ENCODE measurements at regions of chr4 and their contacts with region 1.

Region 1: DNA sequence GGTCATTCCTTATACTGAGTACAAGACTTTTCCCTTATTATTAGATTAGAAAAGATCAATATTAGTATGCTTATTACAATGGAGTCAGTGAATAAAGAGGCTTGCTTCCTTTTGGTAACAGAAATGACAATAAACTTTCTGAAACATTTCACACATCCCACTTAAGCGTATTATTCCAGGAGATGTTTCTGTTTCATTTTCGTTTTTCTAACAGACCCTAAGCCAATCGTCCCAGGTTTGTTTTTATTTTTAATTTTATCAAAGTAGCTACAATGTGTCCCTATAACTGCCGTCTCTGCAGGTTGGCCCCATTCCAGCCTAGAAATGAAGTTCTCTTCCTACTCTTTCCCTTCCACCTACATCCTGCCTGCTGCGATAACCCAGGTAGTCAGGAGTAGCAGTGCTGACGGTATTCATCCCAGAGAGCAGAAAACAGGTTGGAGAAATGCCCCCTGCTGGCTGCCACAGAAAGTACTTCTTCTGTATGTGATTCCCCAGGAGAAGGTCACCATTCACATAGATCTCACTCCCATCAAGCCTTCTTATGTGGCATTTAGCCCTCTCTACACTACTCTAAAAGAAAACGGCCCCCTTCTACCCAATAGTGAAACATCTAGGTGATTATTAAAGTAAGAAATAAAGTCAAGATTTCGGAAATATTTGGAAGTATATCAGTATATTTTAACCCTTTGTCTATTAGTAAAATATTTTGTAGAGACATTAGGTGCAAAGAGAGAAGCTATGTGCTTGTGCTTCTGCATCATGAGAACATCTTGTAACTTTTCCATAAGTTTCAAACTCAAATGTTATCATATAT is 40.4 kb downstream of the ENPEP start:
- DNase-seq: peak; percentile 64 to 72
- H3K4me3 ChIP-seq: peak overlapping the region; percentile 53; the same call in 1 of the 2 replicates
- H3K27ac ChIP-seq: no peak overlapping the region
- H3K4me1 ChIP-seq: no peaks in the 10 kb centered on the region
- H3K27me3 ChIP-seq: no peaks in the 10 kb centered on the region
- CTCF ChIP-seq: peak; percentile 78

Region 2: GRCh38 chr4:110344162-110344561 is 172.2 kb before region 1 on chr4:
- CTCF ChIA-PET with region 1: interaction called, 5 read pairs
- POLR2A ChIA-PET with region 1: no interaction called
- intact Hi-C with region 1: loop called (anchors 2 kb)
- DNase-seq: no peak
- H3K4me3 ChIP-seq: no peak overlapping the region
- H3K27ac ChIP-seq: no peak overlapping the region
- H3K4me1 ChIP-seq: no peaks in the 10 kb centered on the region
- H3K27me3 ChIP-seq: no peaks in the 10 kb centered on the region
- CTCF ChIP-seq: peak; percentile 57